Transverse colon (tissue), 4 donors: ENCODE measurements at regions of chr1 and their contacts with region 1.

Region 1: GRCh38 chr1:155063550-155064110 is at the start of gene EFNA4:
- DNase-seq: peak; percentile 93
- H3K4me3 ChIP-seq: peak within 1 kb of the TSS; percentile 79 to 85 (median 83)
- H3K27ac ChIP-seq: peak within 1 kb of the TSS; percentile 89 to 93 (median 92)
- H3K4me1 ChIP-seq: peaks cover 20 to 38% (median 34%) of the 10 kb centered on the region in 4 donors
- H3K27me3 ChIP-seq: no peaks in the 10 kb centered on the region
- CTCF ChIP-seq: no peak
- EP300 ChIP-seq: no peak
- POLR2A ChIP-seq: peak; percentile 90
- total RNA-seq, gene EFNA4: 18.3 to 57.2 (median 37.2) TPM

Region 2: GRCh38 chr1:155084722-155085503 is 21.3 kb after region 1 on chr1:
- in situ Hi-C with region 1: no loop called
- intact Hi-C with region 1: loop called (anchors 1 kb)
- DNase-seq: peak; percentile 94
- H3K4me3 ChIP-seq: peak overlapping the region; percentile 45 to 78 (median 53)
- H3K27ac ChIP-seq: peak overlapping the region; percentile 90 to 94 (median 92)
- H3K4me1 ChIP-seq: peaks cover 42 to 60% (median 57%) of the 10 kb centered on the region in 4 donors
- H3K27me3 ChIP-seq: peaks cover 43% of the 10 kb centered on the region
- CTCF ChIP-seq: peak; percentile 91 to 99 (median 94)
- EP300 ChIP-seq: peak; percentile 23
- POLR2A ChIP-seq: peak; percentile 83